ENCODE measurements at regions of chr14 and their contacts with region 1.

Region 1: GRCh38 chr14:74249433-74250375 is 10.5 kb downstream of the VSX2 start:
- DNase-seq: no peak
- ATAC-seq: no peak
- H3K4me3 ChIP-seq: no peak overlapping the region
- H3K27ac ChIP-seq: no peak overlapping the region
- H3K4me1 ChIP-seq: no peaks in the 10 kb centered on the region; a peak in 1 of 5 replicates
- H3K27me3 ChIP-seq: peaks cover 9 to 30% of the 10 kb centered on the region in 2 experiments; a peak in 4 of 5 replicates
- CTCF ChIP-seq: no peak
- EP300 ChIP-seq: no peak
- POLR2A ChIP-seq: no peak
- RAD21 ChIP-seq: no peak

Region 2: DNA sequence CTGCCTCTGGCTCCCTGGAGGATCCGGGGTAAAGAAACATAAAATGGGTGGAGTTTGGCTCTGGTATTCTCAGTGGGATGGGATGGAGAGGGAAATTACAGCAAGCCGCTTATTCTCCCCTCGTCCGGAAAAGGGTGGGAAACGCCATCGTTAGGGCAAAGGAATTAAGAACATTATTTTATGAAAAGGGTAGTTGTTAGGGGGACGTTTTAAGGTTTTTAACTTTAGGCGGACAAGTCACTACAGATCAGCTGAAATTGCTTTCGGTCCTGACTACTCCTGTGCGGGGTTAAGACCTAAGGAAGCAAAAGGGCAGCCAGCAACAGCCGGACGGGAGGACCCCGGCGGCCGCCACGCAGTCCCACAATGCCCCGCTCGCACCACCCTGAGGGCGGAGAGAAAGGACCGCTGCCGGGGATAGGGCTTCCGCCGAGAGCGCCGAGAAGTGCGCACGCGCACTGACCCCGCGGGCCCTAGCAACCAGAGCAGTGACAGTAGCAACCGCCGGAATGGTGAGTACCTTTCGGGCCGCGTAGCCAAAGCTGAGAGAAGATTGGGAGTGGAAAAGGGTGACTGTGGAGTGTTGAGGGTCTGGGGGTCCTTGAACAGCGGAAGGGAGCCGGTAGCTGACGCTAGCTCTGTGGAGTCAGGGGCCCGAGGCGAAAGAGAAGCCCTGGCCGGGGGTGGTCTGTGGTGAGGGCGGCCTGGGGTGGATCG is 605.0 kb before region 1 on chr14 and contains the start of gene DNAL1:
- CTCF ChIA-PET with region 1: no interaction called
- POLR2A ChIA-PET with region 1: no interaction called
- in situ Hi-C with region 1: no loop called
- intact Hi-C with region 1: no loop called
- DNase-seq: peak; percentile 92 to 94 (median 94)
- ATAC-seq: peak; percentile 100
- H3K4me3 ChIP-seq: peak within 1 kb of the TSS; percentile 56
- H3K27ac ChIP-seq: peak within 1 kb of the TSS; percentile 75
- H3K4me1 ChIP-seq: peaks cover 0 to 8% of the 10 kb centered on the region in 2 experiments; a peak in 3 of 5 replicates
- H3K27me3 ChIP-seq: no peaks in the 10 kb centered on the region
- CTCF ChIP-seq: no peak
- EP300 ChIP-seq: no peak
- POLR2A ChIP-seq: peak; percentile 84
- RAD21 ChIP-seq: no peak
- polyA plus RNA-seq, gene DNAL1: 8.9 to 11.7 TPM

Region 3: DNA sequence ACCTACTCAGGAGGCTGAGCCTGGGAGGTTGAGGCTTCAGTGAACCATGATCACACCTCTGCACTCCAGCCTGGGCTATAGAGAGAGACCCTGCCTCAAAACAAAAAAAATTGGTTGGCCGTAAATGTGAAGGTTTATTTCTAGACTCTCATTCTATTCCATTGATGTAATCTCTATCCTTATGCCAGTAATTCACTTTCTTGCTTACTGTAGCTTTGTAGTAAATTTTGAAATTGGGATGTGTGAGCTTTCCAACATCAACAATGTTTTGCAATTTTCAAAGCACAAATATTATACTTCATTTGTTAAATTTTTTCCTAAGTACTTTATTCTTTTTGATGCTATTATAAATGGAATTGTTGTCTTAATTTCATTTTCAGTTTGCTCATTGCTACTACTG is 140.3 kb before region 1 on chr14:
- CTCF ChIA-PET with region 1: interaction called, 20 read pairs
- POLR2A ChIA-PET with region 1: no interaction called
- in situ Hi-C with region 1: no loop called
- intact Hi-C with region 1: loop called (anchors 1 kb)
- DNase-seq: no peak
- ATAC-seq: no peak
- H3K4me3 ChIP-seq: no peak overlapping the region
- H3K27ac ChIP-seq: no peak overlapping the region
- H3K4me1 ChIP-seq: no peaks in the 10 kb centered on the region
- H3K27me3 ChIP-seq: no peaks in the 10 kb centered on the region
- CTCF ChIP-seq: no peak
- EP300 ChIP-seq: no peak
- POLR2A ChIP-seq: no peak
- RAD21 ChIP-seq: no peak

Region 4: GRCh38 chr14:74147571-74147970 is 102.1 kb before region 1 on chr14:
- CTCF ChIA-PET with region 1: no interaction called
- POLR2A ChIA-PET with region 1: no interaction called
- in situ Hi-C with region 1: no loop called
- intact Hi-C with region 1: loop called (anchors 2 kb)
- DNase-seq: no peak
- ATAC-seq: no peak
- H3K4me3 ChIP-seq: no peak overlapping the region
- H3K27ac ChIP-seq: no peak overlapping the region
- H3K4me1 ChIP-seq: no peaks in the 10 kb centered on the region; a peak in 2 of 5 replicates
- H3K27me3 ChIP-seq: no peaks in the 10 kb centered on the region
- CTCF ChIP-seq: no peak
- EP300 ChIP-seq: no peak
- POLR2A ChIP-seq: no peak
- RAD21 ChIP-seq: no peak

Region 5: DNA sequence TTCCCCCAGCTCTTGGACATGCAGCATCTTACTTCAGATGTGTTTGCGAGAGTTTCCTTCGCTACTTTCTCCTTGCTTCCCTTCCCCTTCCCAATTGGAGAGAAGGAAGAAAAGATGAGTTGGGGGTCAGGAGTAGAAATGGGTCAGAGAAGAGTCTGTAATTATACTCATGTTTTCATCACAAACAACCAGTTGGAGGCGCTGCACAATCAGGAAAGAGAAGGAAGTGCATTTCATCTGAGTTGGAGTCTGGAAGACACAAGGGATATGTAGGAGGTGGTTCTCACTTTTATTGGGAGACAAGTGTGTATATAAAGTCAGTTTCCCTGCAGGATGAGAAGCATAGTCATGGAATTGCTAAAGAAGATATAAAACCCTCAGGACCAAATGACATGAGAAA is 41.8 kb before region 1 on chr14:
- CTCF ChIA-PET with region 1: no interaction called
- POLR2A ChIA-PET with region 1: no interaction called
- in situ Hi-C with region 1: no loop called
- intact Hi-C with region 1: loop called (anchors 2 kb)
- DNase-seq: peak in 1 of 4 experiments; percentile 18
- ATAC-seq: peak; percentile 45; the same call in 1 of the 3 replicates
- H3K4me3 ChIP-seq: no peak overlapping the region
- H3K27ac ChIP-seq: no peak overlapping the region
- H3K4me1 ChIP-seq: peaks cover 0 to 2% of the 10 kb centered on the region in 2 experiments; a peak in 1 of 5 replicates
- H3K27me3 ChIP-seq: no peaks in the 10 kb centered on the region
- CTCF ChIP-seq: peak; percentile 46 to 49 (median 48); a peak in 5 of 6 replicates
- EP300 ChIP-seq: no peak
- POLR2A ChIP-seq: no peak
- RAD21 ChIP-seq: peak in 1 of 2 experiments; percentile 51; a peak in 2 of 4 replicates

Region 6: DNA sequence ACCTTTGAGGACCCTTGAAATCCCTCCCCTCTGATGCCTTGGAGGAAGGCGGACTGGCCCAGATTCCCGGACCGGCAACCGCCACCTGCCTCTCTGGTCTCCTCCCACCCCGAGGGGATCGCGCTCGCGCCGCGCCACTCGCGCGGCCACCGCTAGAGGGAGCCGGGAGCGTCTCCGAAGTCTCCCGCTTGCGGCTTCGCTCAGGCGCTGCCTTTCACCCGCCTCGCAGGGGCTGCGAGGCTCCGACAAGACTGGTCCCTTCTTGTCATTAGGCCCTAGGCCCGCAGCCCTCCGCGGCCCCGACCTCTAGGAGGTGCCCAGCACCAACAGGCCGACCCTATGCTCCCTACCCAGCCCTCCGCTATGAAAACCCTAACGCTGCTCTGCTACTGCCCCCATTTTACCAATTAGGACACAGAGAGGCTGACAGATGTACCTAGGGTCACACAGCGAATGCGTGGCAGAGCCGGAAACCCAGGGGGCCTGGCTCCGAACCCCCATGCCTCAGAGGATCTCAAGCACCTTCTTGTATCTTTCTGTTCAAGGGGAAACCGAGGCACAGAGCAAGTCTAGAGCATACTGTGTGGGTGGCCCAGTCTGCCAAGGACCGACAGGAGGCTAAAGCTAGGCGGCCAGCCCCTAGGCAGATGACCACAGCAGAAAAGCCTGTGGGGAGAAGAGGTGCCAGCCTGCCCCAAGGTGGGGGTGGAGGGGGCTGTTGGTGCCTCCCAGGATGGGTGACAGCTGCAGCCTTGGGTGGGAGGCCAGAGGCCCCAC is 31.8 kb before region 1 on chr14:
- CTCF ChIA-PET with region 1: interaction called, 4 read pairs
- POLR2A ChIA-PET with region 1: no interaction called
- in situ Hi-C with region 1: no loop called
- intact Hi-C with region 1: loop called (anchors 2 kb)
- DNase-seq: peak; percentile 78 to 84 (median 80)
- ATAC-seq: peak; percentile 99
- H3K4me3 ChIP-seq: peak overlapping the region; percentile 10; the same call in 1 of the 2 replicates
- H3K27ac ChIP-seq: no peak overlapping the region
- H3K4me1 ChIP-seq: peaks cover 0 to 14% of the 10 kb centered on the region in 2 experiments; a peak in 3 of 5 replicates
- H3K27me3 ChIP-seq: peaks cover 2 to 43% of the 10 kb centered on the region in 2 experiments; a peak in 2 of 5 replicates
- CTCF ChIP-seq: peak; percentile 73 to 90 (median 85)
- EP300 ChIP-seq: no peak
- POLR2A ChIP-seq: no peak
- RAD21 ChIP-seq: peak in 1 of 2 experiments; percentile 53; a peak in 2 of 4 replicates

Region 7: GRCh38 chr14:74437496-74438053 is 187.9 kb after region 1 on chr14:
- CTCF ChIA-PET with region 1: no interaction called
- POLR2A ChIA-PET with region 1: no interaction called
- in situ Hi-C with region 1: no loop called
- intact Hi-C with region 1: no loop called
- DNase-seq: peak in 2 of 4 experiments; percentile 6 to 18
- ATAC-seq: no peak
- H3K4me3 ChIP-seq: no peak overlapping the region
- H3K27ac ChIP-seq: no peak overlapping the region
- H3K4me1 ChIP-seq: no peaks in the 10 kb centered on the region
- H3K27me3 ChIP-seq: peaks cover 0 to 11% of the 10 kb centered on the region in 2 experiments; a peak in 3 of 5 replicates
- CTCF ChIP-seq: no peak
- EP300 ChIP-seq: no peak
- POLR2A ChIP-seq: no peak
- RAD21 ChIP-seq: no peak